CD4-positive, alpha-beta T cell (primary cell): ENCODE measurements at regions of chr3 and their contacts with region 1.

Region 1: GRCh38 chr3:48556793-48557626 is at the start of gene PFKFB4:
- DNase-seq: peak; percentile 98 to 100 (median 99)
- ATAC-seq: peak; percentile 87
- H3K4me3 ChIP-seq: peak within 1 kb of the TSS; percentile 55
- H3K4me3 Mint-ChIP-seq: peak within 1 kb of the TSS; percentile 87
- H3K27ac ChIP-seq: no peak within 1 kb of the TSS
- H3K27ac Mint-ChIP-seq: peak within 1 kb of the TSS; percentile 43
- H3K4me1 ChIP-seq: peaks cover 34% of the 10 kb centered on the region
- H3K4me1 Mint-ChIP-seq: peaks cover 25% of the 10 kb centered on the region
- H3K27me3 ChIP-seq: no peaks in the 10 kb centered on the region
- H3K27me3 Mint-ChIP-seq: no peaks in the 10 kb centered on the region
- CTCF ChIP-seq: no peak
- total RNA-seq, gene PFKFB4: 0.98 to 2.5 TPM

Region 2: DNA sequence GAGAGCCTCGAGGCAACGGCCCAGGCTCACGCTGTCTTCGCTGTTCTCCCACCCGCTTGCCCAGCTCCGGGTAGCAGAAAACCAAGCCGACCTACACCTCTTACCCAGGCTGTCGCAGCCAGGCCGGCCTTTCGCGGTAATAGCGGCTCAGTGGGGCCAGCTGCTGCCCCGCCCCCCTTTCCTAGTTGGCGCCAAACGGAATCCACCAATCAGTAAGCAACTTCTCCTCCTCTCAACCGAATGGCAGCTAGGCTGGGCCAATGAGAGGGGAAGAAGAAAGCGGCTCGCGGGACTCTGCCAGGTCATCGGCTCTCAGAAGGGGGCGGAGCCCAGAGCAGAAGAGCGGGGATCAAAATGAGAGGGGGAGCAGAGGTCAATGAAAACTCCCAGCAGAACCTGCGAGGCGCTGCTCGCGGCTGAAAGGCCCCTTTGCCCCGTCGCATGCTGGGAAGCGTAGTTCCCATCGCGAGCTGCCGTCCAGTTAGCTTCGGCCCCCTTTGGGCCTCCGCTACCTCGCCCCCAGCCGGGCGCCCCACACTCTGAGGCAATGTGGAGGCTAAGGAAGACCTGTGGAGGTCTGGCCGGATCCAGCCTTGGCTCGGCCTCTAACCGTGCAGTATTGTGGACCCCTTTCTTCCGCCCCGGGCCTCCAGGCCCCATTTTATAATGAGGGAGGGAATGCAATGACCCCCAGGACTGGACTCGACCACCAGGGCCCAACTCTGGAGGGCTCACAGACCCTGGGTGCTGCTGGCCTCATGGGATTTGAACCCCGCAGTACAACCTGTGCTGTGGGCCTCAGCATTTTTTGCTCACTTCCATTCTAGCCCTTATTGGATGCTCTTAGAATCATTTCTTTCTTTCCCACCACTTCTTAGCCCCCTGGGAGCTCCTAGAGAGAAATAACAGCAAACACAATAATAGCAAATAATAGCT is 368.5 kb before region 1 on chr3 and contains the start of gene CDC25A:
- CTCF ChIA-PET with region 1: interaction called, 3 read pairs
- POLR2A ChIA-PET with region 1: interaction called, 6 read pairs
- intact Hi-C with region 1: loop called in 1 of 2 experiments (anchors 2 kb)
- DNase-seq: peak; percentile 83 to 98 (median 89)
- ATAC-seq: peak; percentile 99
- H3K4me3 ChIP-seq: peak within 1 kb of the TSS; percentile 92
- H3K4me3 Mint-ChIP-seq: peak within 1 kb of the TSS; percentile 93
- H3K27ac ChIP-seq: peak within 1 kb of the TSS in 1 of 2 donors; percentile 48
- H3K27ac Mint-ChIP-seq: peak within 1 kb of the TSS; percentile 35
- H3K4me1 ChIP-seq: peaks cover 18% of the 10 kb centered on the region
- H3K4me1 Mint-ChIP-seq: peaks cover 19% of the 10 kb centered on the region
- H3K27me3 ChIP-seq: peaks cover 0 to 9% of the 10 kb centered on the region in 2 experiments
- H3K27me3 Mint-ChIP-seq: peaks cover 27% of the 10 kb centered on the region
- CTCF ChIP-seq: no peak
- total RNA-seq, gene CDC25A: 0.14 TPM in 1 of 2 experiments, not detected in the other

Region 3: DNA sequence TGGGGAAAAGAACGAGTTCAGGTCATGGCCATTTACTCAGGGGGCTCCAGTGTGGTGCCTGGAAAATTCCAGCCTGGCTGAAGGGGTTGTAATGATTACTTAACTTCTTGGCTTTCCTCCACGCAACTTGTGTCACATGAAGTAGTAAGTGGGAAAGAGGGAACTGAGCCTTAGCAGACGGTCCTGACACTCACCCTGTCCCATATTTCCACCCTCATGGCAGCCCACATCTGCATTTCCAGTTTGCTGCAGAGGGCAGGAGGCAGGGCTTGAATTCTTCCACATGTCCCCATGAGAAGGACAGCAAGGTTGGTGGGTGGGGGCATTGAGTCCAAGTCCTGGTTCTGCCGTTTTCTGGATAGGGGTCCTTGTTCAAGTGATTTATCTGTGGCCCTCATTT is 341.5 kb before region 1 on chr3:
- CTCF ChIA-PET with region 1: no interaction called
- POLR2A ChIA-PET with region 1: no interaction called
- intact Hi-C with region 1: no loop called
- DNase-seq: no peak
- ATAC-seq: no peak
- H3K4me3 ChIP-seq: no peak overlapping the region
- H3K4me3 Mint-ChIP-seq: no peak overlapping the region
- H3K27ac ChIP-seq: no peak overlapping the region
- H3K27ac Mint-ChIP-seq: no peak overlapping the region
- H3K4me1 ChIP-seq: no peaks in the 10 kb centered on the region
- H3K4me1 Mint-ChIP-seq: no peaks in the 10 kb centered on the region
- H3K27me3 ChIP-seq: no peaks in the 10 kb centered on the region
- H3K27me3 Mint-ChIP-seq: no peaks in the 10 kb centered on the region
- CTCF ChIP-seq: no peak

Region 4: DNA sequence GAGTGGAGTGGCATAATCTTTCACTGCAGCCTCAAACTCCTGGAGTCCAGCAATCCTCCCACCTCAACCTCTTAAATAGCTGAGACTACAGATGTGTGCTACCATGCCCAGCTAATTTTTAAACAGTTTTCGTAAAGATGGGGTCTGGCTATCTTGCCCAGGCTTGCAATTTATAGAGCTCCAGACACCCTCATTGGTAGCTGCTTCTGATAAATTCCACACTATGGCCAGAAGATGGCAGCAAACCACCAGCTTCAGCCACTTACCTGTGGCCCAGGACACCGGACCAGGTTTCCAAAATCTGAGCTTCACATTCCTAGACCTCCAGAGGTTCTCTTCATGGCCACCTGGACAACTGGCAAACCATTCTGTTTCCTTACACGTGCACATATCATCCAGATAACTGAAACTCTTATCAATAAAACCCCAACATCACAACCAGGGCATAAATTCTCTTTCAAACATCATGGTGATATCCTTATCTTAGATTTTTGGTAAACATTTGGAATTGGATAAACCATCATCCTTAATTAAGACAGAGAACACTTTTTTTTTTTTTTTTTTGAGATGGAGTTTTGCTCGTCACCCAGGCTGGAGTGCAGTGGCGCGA is 156.1 kb before region 1 on chr3:
- CTCF ChIA-PET with region 1: interaction called, 18 read pairs
- POLR2A ChIA-PET with region 1: interaction called, 5 read pairs
- intact Hi-C with region 1: loop called in 1 of 2 experiments (anchors 1 kb)
- DNase-seq: peak; percentile 45 to 88 (median 56)
- ATAC-seq: peak; percentile 82
- H3K4me3 ChIP-seq: no peak overlapping the region
- H3K4me3 Mint-ChIP-seq: no peak overlapping the region
- H3K27ac ChIP-seq: no peak overlapping the region
- H3K27ac Mint-ChIP-seq: no peak overlapping the region
- H3K4me1 ChIP-seq: no peaks in the 10 kb centered on the region
- H3K4me1 Mint-ChIP-seq: no peaks in the 10 kb centered on the region
- H3K27me3 ChIP-seq: no peaks in the 10 kb centered on the region
- H3K27me3 Mint-ChIP-seq: peaks cover 1% of the 10 kb centered on the region
- CTCF ChIP-seq: peak; percentile 93

Region 5: GRCh38 chr3:48492543-48493501 is 64.2 kb before region 1 on chr3:
- CTCF ChIA-PET with region 1: no interaction called
- POLR2A ChIA-PET with region 1: no interaction called
- intact Hi-C with region 1: no loop called
- DNase-seq: no peak
- ATAC-seq: no peak
- H3K4me3 ChIP-seq: no peak overlapping the region
- H3K4me3 Mint-ChIP-seq: no peak overlapping the region
- H3K27ac ChIP-seq: no peak overlapping the region
- H3K27ac Mint-ChIP-seq: no peak overlapping the region
- H3K4me1 ChIP-seq: no peaks in the 10 kb centered on the region
- H3K4me1 Mint-ChIP-seq: no peaks in the 10 kb centered on the region
- H3K27me3 ChIP-seq: no peaks in the 10 kb centered on the region
- H3K27me3 Mint-ChIP-seq: no peaks in the 10 kb centered on the region
- CTCF ChIP-seq: no peak

Region 6: GRCh38 chr3:48609088-48610005 is 52.3 kb after region 1 on chr3 and contains the start of gene UQCRC1:
- CTCF ChIA-PET with region 1: interaction called, 3 read pairs
- POLR2A ChIA-PET with region 1: interaction called, 3 read pairs
- intact Hi-C with region 1: loop called in 1 of 2 experiments (anchors 2 kb)
- DNase-seq: peak; percentile 85 to 97 (median 91)
- ATAC-seq: peak; percentile 99
- H3K4me3 ChIP-seq: peak within 1 kb of the TSS; percentile 99
- H3K4me3 Mint-ChIP-seq: peak within 1 kb of the TSS; percentile 100
- H3K27ac ChIP-seq: peak within 1 kb of the TSS; percentile 55 to 60
- H3K27ac Mint-ChIP-seq: peak within 1 kb of the TSS; percentile 97
- H3K4me1 ChIP-seq: peaks cover 22% of the 10 kb centered on the region
- H3K4me1 Mint-ChIP-seq: peaks cover 21% of the 10 kb centered on the region
- H3K27me3 ChIP-seq: no peaks in the 10 kb centered on the region
- H3K27me3 Mint-ChIP-seq: no peaks in the 10 kb centered on the region
- CTCF ChIP-seq: peak; percentile 94
- total RNA-seq, gene UQCRC1: 74.1 to 75.5 TPM

Region 7: GRCh38 chr3:48716982-48717746 is 160.2 kb after region 1 on chr3 and contains the start of gene IP6K2:
- CTCF ChIA-PET with region 1: no interaction called
- POLR2A ChIA-PET with region 1: interaction called, 4 read pairs
- intact Hi-C with region 1: loop called in 1 of 2 experiments (anchors 5 kb)
- DNase-seq: peak; percentile 97 to 99 (median 98)
- ATAC-seq: peak; percentile 99
- H3K4me3 ChIP-seq: peak within 1 kb of the TSS; percentile 89
- H3K4me3 Mint-ChIP-seq: peak within 1 kb of the TSS; percentile 96
- H3K27ac ChIP-seq: peak within 1 kb of the TSS; percentile 77 to 88
- H3K27ac Mint-ChIP-seq: peak within 1 kb of the TSS; percentile 88
- H3K4me1 ChIP-seq: peaks cover 38% of the 10 kb centered on the region
- H3K4me1 Mint-ChIP-seq: peaks cover 43% of the 10 kb centered on the region
- H3K27me3 ChIP-seq: no peaks in the 10 kb centered on the region
- H3K27me3 Mint-ChIP-seq: no peaks in the 10 kb centered on the region
- CTCF ChIP-seq: no peak
- total RNA-seq, gene IP6K2: 97.2 to 121 TPM